ENCODE measurements at regions of chr1 and their contacts with region 1.

Region 1: GRCh38 chr1:165768513-165769394 is at the start of gene TMCO1:
- DNase-seq: peak; percentile 96
- H3K4me3 Mint-ChIP-seq: peak within 1 kb of the TSS; percentile 98
- H3K27ac Mint-ChIP-seq: peak within 1 kb of the TSS; percentile 97
- H3K4me1 Mint-ChIP-seq: peaks cover 49% of the 10 kb centered on the region
- H3K27me3 Mint-ChIP-seq: no peaks in the 10 kb centered on the region
- total RNA-seq, gene TMCO1: 50.5 to 50.7 TPM

Region 2: DNA sequence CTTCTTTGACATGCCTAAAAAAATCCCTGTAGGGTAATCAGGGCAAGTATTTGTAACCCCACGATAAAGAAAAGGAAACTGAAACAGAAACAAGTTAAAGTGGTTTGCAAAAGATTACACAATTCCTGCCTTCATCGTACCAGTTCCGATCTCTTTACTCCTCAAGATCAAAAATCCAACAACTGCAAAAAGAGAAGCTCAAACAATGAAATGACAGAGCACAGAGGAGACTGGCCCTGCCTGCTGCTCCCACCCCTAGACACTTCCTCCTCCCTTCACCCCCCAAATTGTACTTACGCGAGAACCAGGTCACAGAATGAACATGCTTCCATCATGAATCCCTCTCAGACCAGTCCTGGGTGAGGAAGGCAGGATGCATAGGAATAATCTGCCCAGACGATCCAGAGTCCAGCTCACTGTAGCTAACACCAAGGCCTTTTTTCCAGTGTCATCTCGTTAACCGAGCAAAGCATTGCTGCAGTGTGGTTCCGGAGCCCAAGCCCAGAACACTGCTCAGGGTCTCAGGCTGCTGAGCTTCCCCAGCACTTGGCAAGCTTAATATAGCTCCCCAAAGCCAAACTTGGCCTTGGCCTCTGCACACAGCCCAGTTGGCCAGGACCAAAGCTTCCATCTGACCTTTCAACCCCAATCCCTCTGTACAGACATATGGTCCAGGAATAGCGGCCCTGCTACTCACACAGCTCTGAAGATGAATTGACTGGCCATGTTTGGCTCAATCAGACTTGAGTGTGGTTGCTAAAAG is 344.1 kb before region 1 on chr1:
- CTCF ChIA-PET with region 1: no interaction called
- intact Hi-C with region 1: loop called (anchors 5 kb)
- DNase-seq: peak; percentile 44
- H3K4me3 Mint-ChIP-seq: peak overlapping the region; percentile 68
- H3K27ac Mint-ChIP-seq: peak overlapping the region; percentile 87
- H3K4me1 Mint-ChIP-seq: peaks cover 28% of the 10 kb centered on the region
- H3K27me3 Mint-ChIP-seq: no peaks in the 10 kb centered on the region

Region 3: GRCh38 chr1:165871311-165872067 is 102.7 kb after region 1 on chr1:
- CTCF ChIA-PET with region 1: no interaction called
- intact Hi-C with region 1: loop called (anchors 1 kb)
- DNase-seq: peak; percentile 83
- H3K4me3 Mint-ChIP-seq: no peak overlapping the region
- H3K27ac Mint-ChIP-seq: no peak overlapping the region
- H3K4me1 Mint-ChIP-seq: peaks cover 47% of the 10 kb centered on the region
- H3K27me3 Mint-ChIP-seq: peaks cover 1% of the 10 kb centered on the region

Region 4: DNA sequence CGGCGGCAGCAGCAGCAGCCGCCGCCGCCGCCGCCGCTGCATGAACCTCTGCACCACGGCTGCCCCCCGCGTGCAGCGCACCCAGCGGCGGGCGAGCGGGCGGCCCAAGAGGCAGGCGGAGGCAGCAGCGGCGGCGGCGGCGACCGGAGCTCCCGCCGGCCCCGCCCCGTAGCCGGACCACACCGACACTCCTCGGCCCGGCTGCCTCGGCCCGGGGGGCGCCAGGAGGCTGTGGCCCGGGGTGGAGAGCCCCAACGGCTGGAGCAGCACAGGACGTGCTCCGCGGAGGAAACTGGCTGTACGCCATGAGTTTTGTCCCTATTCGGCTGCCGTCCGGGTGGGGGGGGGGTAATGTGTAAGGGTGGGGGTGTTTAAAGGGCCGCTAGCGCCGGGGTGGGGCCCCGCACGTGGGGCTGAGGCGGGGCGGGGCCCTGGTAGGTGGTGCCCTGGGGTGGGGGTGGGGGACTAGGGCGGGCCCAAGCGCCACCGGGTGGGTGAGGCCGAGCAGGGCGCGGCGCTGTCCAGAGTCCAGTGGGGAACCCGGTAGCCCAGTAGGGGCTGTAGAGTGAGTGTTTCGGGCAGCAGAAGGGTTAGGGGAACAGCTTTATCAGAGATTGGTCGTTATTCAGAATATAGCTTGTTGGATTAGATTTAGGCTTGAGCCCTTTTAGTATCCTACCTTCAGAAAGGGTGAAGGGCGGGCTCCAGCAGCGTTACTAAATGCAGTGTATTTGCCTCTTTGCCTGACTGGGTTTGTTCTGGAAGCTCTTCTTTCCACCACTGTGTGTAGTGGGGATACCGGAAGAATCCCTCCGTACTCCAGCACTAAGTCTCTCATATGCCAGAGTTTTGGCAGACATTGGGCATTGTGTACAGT is 398.2 kb after region 1 on chr1 and contains the start of gene FAM78B:
- CTCF ChIA-PET with region 1: no interaction called
- intact Hi-C with region 1: loop called (anchors 2 kb)
- DNase-seq: peak; percentile 65
- H3K4me3 Mint-ChIP-seq: peak within 1 kb of the TSS; percentile 71
- H3K27ac Mint-ChIP-seq: no peak within 1 kb of the TSS
- H3K4me1 Mint-ChIP-seq: peaks cover 30% of the 10 kb centered on the region
- H3K27me3 Mint-ChIP-seq: peaks cover 55% of the 10 kb centered on the region
- total RNA-seq, gene FAM78B: 0.24 TPM in 1 of 2 experiments, not detected in the other

Region 5: GRCh38 chr1:166875734-166876539 is 1107.2 kb after region 1 on chr1 and contains the start of gene TADA1:
- CTCF ChIA-PET with region 1: no interaction called
- intact Hi-C with region 1: loop called (anchors 1 kb)
- DNase-seq: peak; percentile 100
- H3K4me3 Mint-ChIP-seq: peak within 1 kb of the TSS; percentile 99
- H3K27ac Mint-ChIP-seq: peak within 1 kb of the TSS; percentile 97
- H3K4me1 Mint-ChIP-seq: peaks cover 37% of the 10 kb centered on the region
- H3K27me3 Mint-ChIP-seq: no peaks in the 10 kb centered on the region
- total RNA-seq, gene TADA1: 19.6 to 19.9 TPM

Measured in activated naive CD4-positive, alpha-beta T cell treated with anti-CD3 and anti-CD28 coated beads for 36 hours (primary cell).